Mammary epithelial cell (primary cell): ENCODE measurements at regions of chr11 and their contacts with region 1.

Region 1: DNA sequence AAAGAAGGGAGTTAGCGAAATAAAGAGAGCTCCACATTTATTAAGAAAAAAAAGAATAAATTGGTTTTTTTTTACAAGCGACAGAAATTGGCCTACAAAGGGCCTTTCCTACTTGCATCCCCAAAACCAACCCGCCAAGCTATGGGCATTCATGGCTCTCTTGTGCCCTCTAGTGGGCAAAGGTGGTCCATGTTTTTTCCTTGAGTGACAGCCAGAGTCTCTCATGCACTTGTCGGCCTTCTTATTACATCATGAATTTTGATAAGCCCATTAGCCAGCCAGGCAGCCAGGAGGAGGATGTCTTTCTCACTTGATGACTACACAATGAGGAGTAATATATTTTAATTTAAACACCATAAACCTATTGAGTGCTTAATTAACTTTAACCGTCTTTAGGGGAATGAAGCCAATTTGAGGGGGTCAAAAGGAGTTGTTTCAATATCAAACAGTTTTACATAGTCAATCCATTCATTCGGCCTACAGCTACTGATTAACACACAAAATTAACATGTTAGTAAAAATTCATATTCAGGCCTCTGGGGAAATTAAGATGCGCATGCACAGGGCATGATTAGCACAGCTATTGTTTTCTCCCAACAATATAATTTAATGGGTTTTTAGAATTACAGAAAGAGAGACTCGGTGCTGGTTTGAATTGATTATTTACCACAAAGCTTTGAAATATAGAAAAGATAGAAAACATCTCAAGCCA is 85.5 kb downstream of the RCN1 start:
- DNase-seq: peak; percentile 72
- H3K4me3 ChIP-seq: no peak overlapping the region
- H3K27ac ChIP-seq: no peak overlapping the region
- H3K4me1 ChIP-seq: peaks cover 4% of the 10 kb centered on the region
- H3K27me3 ChIP-seq: peaks cover 2% of the 10 kb centered on the region
- CTCF ChIP-seq: peak; percentile 88 to 89

Region 2: DNA sequence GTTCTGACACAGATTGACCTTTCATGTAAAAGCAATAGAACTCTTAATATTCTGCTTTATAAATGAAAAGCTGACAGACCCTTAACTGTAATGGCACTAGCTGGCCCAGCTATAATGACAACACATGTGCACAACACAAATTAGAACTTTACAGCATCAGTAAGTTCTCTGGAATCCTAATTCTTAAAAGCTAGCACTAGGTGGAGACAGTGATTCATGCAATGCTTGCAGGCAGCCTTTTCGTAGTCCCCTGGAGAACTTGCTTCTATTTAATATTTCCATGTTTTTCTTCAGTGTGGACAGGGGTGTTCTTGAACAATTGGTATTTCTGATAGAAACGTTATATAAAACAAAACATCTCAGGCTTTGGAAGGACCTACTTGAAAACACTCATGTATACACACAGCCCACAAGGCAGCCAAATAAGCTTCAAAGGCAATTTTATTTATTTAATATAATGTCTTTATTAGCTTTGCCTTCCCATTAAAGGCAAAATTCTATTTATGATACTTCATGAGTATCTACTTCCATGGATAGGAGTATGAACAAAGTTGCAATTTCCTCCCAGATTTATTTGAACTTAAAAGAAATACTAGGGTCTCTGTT is 1215.9 kb before region 1 on chr11:
- CTCF ChIA-PET with region 1: no interaction called
- dilution Hi-C with region 1: no loop called
- in situ Hi-C with region 1: no loop called
- intact Hi-C with region 1: loop called (anchors 5 kb)
- DNase-seq: no peak
- H3K4me3 ChIP-seq: no peak overlapping the region
- H3K27ac ChIP-seq: no peak overlapping the region
- H3K4me1 ChIP-seq: no peaks in the 10 kb centered on the region
- H3K27me3 ChIP-seq: no peaks in the 10 kb centered on the region
- CTCF ChIP-seq: peak; percentile 48 to 64

Region 3: GRCh38 chr11:31107062-31107461 is 1069.3 kb before region 1 on chr11:
- CTCF ChIA-PET with region 1: no interaction called
- dilution Hi-C with region 1: no loop called
- in situ Hi-C with region 1: loop called (anchors 25 kb)
- intact Hi-C with region 1: loop called (anchors 2 kb)
- DNase-seq: peak; percentile 39
- H3K4me3 ChIP-seq: no peak overlapping the region
- H3K27ac ChIP-seq: no peak overlapping the region
- H3K4me1 ChIP-seq: no peaks in the 10 kb centered on the region
- H3K27me3 ChIP-seq: no peaks in the 10 kb centered on the region
- CTCF ChIP-seq: peak; percentile 77 to 85

Region 4: GRCh38 chr11:31397239-31397834 is 779.0 kb before region 1 on chr11:
- CTCF ChIA-PET with region 1: no interaction called
- dilution Hi-C with region 1: no loop called
- in situ Hi-C with region 1: loop called in 1 of 2 experiments (anchors 25 kb)
- intact Hi-C with region 1: loop called (anchors 1 kb)
- DNase-seq: peak; percentile 2
- H3K4me3 ChIP-seq: no peak overlapping the region
- H3K27ac ChIP-seq: no peak overlapping the region
- H3K4me1 ChIP-seq: no peaks in the 10 kb centered on the region
- H3K27me3 ChIP-seq: no peaks in the 10 kb centered on the region
- CTCF ChIP-seq: peak; percentile 65 to 73

Region 5: DNA sequence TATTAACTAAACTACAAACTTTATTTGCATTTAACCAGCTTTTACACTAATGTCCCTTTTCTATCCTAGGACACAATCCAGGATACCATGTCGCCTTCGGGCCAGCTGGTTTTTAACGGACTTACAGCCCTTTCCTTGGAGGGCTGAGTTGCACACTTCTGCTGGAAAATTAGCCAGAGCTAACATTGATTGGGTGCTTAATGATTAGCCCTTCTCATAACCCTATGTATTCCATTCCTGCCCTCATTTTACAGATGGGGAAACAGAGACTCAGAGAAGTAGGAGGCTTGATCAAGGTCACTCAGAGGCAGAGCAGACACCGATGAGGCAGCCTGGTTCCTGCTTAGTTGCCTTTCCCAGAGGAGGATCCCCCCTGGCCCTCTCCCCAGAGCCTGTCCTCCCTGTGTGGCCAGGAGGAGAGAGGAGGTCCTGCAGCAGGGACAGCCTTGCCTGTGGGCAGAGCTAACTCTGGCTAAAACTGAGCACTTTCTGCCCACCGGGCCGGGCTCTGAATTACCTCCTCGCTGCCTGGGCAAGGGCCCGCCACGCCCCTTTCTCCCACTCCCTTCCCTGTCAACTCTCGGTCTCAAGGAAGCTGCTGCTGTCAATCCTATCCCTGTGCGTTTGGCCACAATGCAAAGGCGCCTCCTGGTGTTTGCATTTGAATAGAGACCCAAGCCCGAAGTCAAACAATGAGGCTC is 305.6 kb before region 1 on chr11:
- CTCF ChIA-PET with region 1: no interaction called
- dilution Hi-C with region 1: no loop called
- in situ Hi-C with region 1: no loop called
- intact Hi-C with region 1: loop called (anchors 5 kb)
- DNase-seq: peak; percentile 23
- H3K4me3 ChIP-seq: no peak overlapping the region
- H3K27ac ChIP-seq: no peak overlapping the region
- H3K4me1 ChIP-seq: peaks cover 7% of the 10 kb centered on the region
- H3K27me3 ChIP-seq: no peaks in the 10 kb centered on the region
- CTCF ChIP-seq: peak; percentile 42 to 83

Region 6: GRCh38 chr11:32052218-32052617 is 124.2 kb before region 1 on chr11:
- CTCF ChIA-PET with region 1: no interaction called
- dilution Hi-C with region 1: loop called (anchors 5 kb)
- in situ Hi-C with region 1: loop called (anchors 5 kb)
- intact Hi-C with region 1: loop called (anchors 1 kb)
- DNase-seq: peak; percentile 25
- H3K4me3 ChIP-seq: no peak overlapping the region
- H3K27ac ChIP-seq: no peak overlapping the region
- H3K4me1 ChIP-seq: peaks cover 11% of the 10 kb centered on the region
- H3K27me3 ChIP-seq: no peaks in the 10 kb centered on the region
- CTCF ChIP-seq: peak; percentile 61 to 74

Region 7: DNA sequence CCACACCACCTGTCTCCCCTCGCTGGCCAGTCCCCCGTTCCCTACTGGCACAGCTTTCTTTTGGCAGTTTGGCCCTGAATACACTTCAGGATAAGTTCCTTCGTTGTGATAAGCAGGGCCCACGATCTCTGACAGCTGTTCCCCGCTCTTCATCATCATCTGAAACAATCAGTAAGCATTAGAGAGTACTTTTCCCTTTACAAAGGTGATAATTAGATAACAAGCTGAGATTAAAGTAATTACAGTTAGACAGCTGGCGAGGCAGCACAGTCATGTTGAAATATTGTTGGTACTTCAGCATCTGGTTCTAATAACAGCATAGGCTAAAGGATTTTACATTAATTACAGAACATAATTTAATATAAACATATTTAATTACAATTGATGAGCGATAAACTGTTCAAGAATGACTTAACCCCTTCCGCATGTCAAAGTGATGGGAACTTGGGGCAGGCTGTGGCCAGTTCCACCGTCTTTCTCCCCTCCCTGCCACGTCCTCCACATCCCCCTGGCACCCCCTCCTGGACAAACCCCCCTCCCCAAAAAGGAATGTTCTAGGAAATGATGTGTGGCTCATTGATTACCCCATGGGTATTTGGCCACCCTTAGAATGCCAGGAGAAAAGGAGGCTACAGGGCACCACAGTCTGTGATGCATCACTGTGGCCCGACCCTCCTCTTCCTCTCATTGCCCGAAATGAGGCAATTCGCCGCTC is 49.3 kb after region 1 on chr11:
- CTCF ChIA-PET with region 1: no interaction called
- dilution Hi-C with region 1: no loop called
- in situ Hi-C with region 1: no loop called
- intact Hi-C with region 1: no loop called
- DNase-seq: no peak
- H3K4me3 ChIP-seq: no peak overlapping the region
- H3K27ac ChIP-seq: no peak overlapping the region
- H3K4me1 ChIP-seq: no peaks in the 10 kb centered on the region
- H3K27me3 ChIP-seq: no peaks in the 10 kb centered on the region
- CTCF ChIP-seq: no peak

Region 8: GRCh38 chr11:32297611-32298011 is 121.2 kb after region 1 on chr11:
- CTCF ChIA-PET with region 1: no interaction called
- dilution Hi-C with region 1: no loop called
- in situ Hi-C with region 1: no loop called
- intact Hi-C with region 1: loop called (anchors 1 kb)
- DNase-seq: peak; percentile 47
- H3K4me3 ChIP-seq: no peak overlapping the region
- H3K27ac ChIP-seq: no peak overlapping the region
- H3K4me1 ChIP-seq: peaks cover 2% of the 10 kb centered on the region
- H3K27me3 ChIP-seq: peaks cover 5% of the 10 kb centered on the region
- CTCF ChIP-seq: peak; percentile 26 to 38